Calu3 (cell line): ENCODE measurements at regions of chr5 and their contacts with region 1.

Region 1: GRCh38 chr5:104400941-104401340 is 838.4 kb upstream of the NUDT12 start:
- DNase-seq: no peak
- H3K4me3 Mint-ChIP-seq: no peak overlapping the region
- H3K27ac Mint-ChIP-seq: no peak overlapping the region
- H3K4me1 Mint-ChIP-seq: peaks cover 8% of the 10 kb centered on the region
- H3K27me3 Mint-ChIP-seq: no peaks in the 10 kb centered on the region
- CTCF ChIP-seq: no peak

Region 2: DNA sequence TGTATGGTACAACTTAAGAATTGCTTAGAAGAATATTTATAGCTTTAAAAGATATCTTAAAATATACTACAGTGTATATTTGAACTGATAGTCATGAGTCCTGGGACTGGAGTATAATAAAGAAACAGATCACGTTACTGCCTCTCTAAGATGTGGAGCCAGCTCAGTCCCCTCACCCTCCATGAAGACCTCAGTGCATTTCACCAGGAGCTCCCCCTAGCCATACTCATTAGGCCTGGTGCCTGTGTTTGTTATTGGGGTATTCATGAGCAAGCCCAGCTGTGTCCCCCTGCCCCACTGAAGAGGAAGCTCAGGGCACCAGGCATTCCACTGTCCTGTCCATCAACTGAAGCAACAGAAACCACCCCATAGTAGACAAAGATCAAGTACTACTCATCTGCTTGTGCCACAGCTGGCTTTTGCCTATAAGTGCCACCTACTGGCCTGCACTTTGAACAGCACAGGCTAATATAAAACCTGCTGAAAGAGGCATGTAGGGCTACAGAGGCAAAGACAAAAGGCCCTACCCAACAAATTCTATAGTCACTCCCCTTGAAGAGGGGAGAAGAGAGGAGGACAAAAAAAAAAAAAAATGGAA is 11.8 kb after region 1 on chr5:
- CTCF ChIA-PET with region 1: interaction called, 12 read pairs
- intact Hi-C with region 1: no loop called
- DNase-seq: peak; percentile 38
- H3K4me3 Mint-ChIP-seq: no peak overlapping the region
- H3K27ac Mint-ChIP-seq: no peak overlapping the region
- H3K4me1 Mint-ChIP-seq: no peaks in the 10 kb centered on the region
- H3K27me3 Mint-ChIP-seq: no peaks in the 10 kb centered on the region
- CTCF ChIP-seq: peak; percentile 72